OCI-LY7 (cell line): ENCODE measurements at regions of chr5 and their contacts with region 1.

Region 1: GRCh38 chr5:150350524-150351344 is 6.8 kb upstream of the TCOF1 start:
- DNase-seq: peak; percentile 81
- H3K4me3 ChIP-seq: no peak overlapping the region
- H3K27ac ChIP-seq: no peak overlapping the region
- H3K4me1 ChIP-seq: peaks cover 22% of the 10 kb centered on the region
- CTCF ChIP-seq: peak; percentile 95

Region 2: GRCh38 chr5:150129813-150130492 is 220.8 kb before region 1 on chr5:
- CTCF ChIA-PET with region 1: no interaction called
- POLR2A ChIA-PET with region 1: interaction called, 3 read pairs
- intact Hi-C with region 1: loop called (anchors 2 kb)
- DNase-seq: peak; percentile 53
- H3K4me3 ChIP-seq: no peak overlapping the region
- H3K27ac ChIP-seq: no peak overlapping the region
- H3K4me1 ChIP-seq: no peaks in the 10 kb centered on the region
- CTCF ChIP-seq: peak; percentile 89

Region 3: DNA sequence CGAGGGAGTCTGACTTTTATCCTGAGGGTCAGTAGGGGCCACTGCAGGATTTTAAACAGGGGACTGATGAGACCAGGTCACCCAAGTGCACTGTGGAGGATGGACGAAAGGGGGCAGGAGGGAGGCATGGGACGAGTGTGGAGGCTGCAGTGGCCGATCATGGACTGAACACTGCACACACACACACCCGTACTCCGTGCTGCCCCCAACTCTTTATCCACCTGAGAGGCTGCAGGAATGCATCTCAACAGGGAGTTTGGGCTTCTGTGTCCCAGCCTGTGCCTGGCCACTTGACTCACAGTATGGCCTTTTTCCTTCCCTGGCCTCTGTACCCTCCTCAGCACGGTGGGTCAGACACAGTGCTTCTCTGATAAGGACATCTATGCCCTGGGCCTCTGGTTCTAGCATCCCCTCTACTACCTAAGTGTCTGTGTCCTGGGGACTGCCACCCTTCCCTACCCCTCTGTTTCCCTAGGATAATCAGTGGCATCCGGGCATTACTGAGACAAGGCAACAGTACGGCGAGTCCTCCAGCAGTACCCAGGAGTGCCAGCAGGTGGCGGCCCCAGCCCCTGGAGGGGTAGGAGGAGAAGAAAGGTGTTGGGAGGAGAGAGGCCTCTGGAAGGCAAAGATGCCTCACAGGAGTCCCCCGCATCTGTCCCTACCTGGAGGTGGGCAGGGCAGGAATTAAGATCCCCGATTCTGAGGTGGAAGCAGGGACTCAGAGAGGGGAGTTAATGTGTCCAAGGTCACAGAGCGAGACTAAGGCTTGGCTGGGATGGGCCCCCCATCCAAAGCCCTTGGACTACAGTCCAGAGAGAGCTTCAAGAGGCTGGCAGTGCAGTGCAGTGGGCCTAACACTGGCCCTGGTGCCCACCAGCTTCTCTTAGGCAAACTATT is 189.2 kb before region 1 on chr5:
- CTCF ChIA-PET with region 1: no interaction called
- POLR2A ChIA-PET with region 1: interaction called, 3 read pairs
- intact Hi-C with region 1: loop called (anchors 1 kb)
- DNase-seq: peak; percentile 69
- H3K4me3 ChIP-seq: no peak overlapping the region
- H3K27ac ChIP-seq: no peak overlapping the region
- H3K4me1 ChIP-seq: peaks cover 13% of the 10 kb centered on the region
- CTCF ChIP-seq: peak; percentile 91

Region 4: GRCh38 chr5:150272526-150272925 is 78.2 kb before region 1 on chr5:
- CTCF ChIA-PET with region 1: no interaction called
- POLR2A ChIA-PET with region 1: no interaction called
- intact Hi-C with region 1: loop called (anchors 2 kb)
- DNase-seq: peak; percentile 49
- H3K4me3 ChIP-seq: no peak overlapping the region
- H3K27ac ChIP-seq: no peak overlapping the region
- H3K4me1 ChIP-seq: no peaks in the 10 kb centered on the region
- CTCF ChIP-seq: peak; percentile 56